Dendritic cell treated with granulocyte-macrophage colony-stimulating factor and Interleukin-4, amounts not matched to agents 40 ng/mL and 50 ng/mL, for 4 days (primary cell): ENCODE measurements at regions of chr10 and their contacts with region 1.

Region 1: GRCh38 chr10:53601260-53601875 is 828.8 kb upstream of the MBL2 start:
- H3K4me3 Mint-ChIP-seq: no peak overlapping the region
- H3K27ac Mint-ChIP-seq: no peak overlapping the region
- H3K4me1 Mint-ChIP-seq: no peaks in the 10 kb centered on the region
- H3K27me3 Mint-ChIP-seq: no peaks in the 10 kb centered on the region

Region 2: GRCh38 chr10:52951824-52952223 is 649.5 kb before region 1 on chr10:
- intact Hi-C with region 1: loop called (anchors 5 kb)
- H3K4me3 Mint-ChIP-seq: no peak overlapping the region
- H3K27ac Mint-ChIP-seq: no peak overlapping the region
- H3K4me1 Mint-ChIP-seq: no peaks in the 10 kb centered on the region
- H3K27me3 Mint-ChIP-seq: peaks cover 5% of the 10 kb centered on the region

Region 3: DNA sequence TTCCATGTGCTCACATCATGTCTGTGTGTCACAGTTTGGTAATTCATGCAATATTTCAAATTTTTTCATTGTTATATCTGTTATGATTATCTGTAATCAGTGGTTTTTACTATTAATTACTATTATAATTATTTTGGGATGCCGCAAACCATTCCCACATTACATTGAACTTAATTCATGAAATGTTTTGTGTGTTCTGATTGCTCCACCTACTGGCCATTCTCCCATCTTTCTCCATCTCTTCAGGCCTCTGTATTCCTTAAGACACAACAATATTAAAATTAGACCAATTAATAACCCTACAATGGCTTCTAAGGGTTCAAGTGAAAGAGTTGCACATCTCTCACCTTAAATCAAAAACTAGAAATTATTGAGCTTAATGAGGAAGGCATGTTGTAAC is 801.2 kb after region 1 on chr10:
- intact Hi-C with region 1: loop called (anchors 5 kb)
- H3K4me3 Mint-ChIP-seq: no peak overlapping the region
- H3K27ac Mint-ChIP-seq: no peak overlapping the region
- H3K4me1 Mint-ChIP-seq: no peaks in the 10 kb centered on the region
- H3K27me3 Mint-ChIP-seq: no peaks in the 10 kb centered on the region